A673 (cell line): ENCODE measurements at regions of chr5 and their contacts with region 1.

Region 1: DNA sequence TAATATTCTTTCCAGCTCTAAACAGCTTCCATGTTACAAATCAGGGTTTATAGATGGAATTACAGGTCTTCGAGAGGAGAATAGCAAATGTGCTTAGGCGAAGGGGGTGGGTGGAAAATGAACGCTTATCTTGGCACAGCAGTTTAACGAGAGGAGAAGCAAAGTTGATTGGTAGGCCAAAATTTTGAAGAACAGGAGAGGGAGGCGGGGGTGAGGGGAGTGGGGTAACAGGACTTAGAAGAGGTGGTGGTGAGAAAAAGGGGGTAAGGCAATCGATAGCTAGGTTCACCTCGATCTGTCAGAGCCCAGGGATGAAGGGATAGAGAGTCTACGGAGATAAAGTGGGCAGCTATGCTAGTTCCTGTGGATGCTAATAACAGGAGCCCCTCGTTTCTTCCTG is 764 bp downstream of the ANKRA2 start:
- DNase-seq: no peak
- H3K4me3 ChIP-seq: peak overlapping the region; percentile 80
- H3K27ac ChIP-seq: peak overlapping the region; percentile 88
- H3K4me1 ChIP-seq: peaks cover 10% of the 10 kb centered on the region
- H3K27me3 ChIP-seq: no peaks in the 10 kb centered on the region
- CTCF ChIP-seq: no peak

Region 2: DNA sequence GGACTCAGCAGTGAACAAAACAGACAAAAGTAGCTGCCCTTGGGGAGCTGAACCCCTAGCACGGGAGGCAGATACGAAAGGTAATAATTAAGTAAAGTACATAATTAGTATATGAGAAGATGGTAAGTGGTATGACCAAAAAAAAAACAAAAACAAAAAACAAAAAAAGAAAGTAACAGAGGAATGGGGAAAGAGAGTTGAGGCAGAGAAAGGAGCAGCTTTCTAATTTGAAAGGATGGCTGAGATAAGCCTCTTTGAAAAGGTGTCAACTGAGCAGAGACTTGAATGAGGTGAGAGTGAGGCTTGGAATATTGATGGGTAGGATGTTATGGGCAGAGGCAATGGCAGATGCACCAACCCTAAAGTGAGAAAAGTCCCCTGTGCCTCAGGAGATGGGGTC is 1775.9 kb before region 1 on chr5:
- CTCF ChIA-PET with region 1: no interaction called
- POLR2A ChIA-PET with region 1: interaction called, 10 read pairs
- intact Hi-C with region 1: no loop called
- DNase-seq: no peak
- H3K4me3 ChIP-seq: no peak overlapping the region
- H3K27ac ChIP-seq: no peak overlapping the region
- H3K4me1 ChIP-seq: no peaks in the 10 kb centered on the region
- H3K27me3 ChIP-seq: no peaks in the 10 kb centered on the region
- CTCF ChIP-seq: no peak

Region 3: GRCh38 chr5:73464016-73464745 is 100.5 kb before region 1 on chr5:
- CTCF ChIA-PET with region 1: no interaction called
- POLR2A ChIA-PET with region 1: no interaction called
- intact Hi-C with region 1: no loop called
- DNase-seq: peak; percentile 4
- H3K4me3 ChIP-seq: no peak overlapping the region
- H3K27ac ChIP-seq: no peak overlapping the region
- H3K4me1 ChIP-seq: no peaks in the 10 kb centered on the region
- H3K27me3 ChIP-seq: peaks cover 3% of the 10 kb centered on the region
- CTCF ChIP-seq: no peak

Region 4: GRCh38 chr5:73663860-73664240 is 99.2 kb after region 1 on chr5:
- CTCF ChIA-PET with region 1: no interaction called
- POLR2A ChIA-PET with region 1: no interaction called
- intact Hi-C with region 1: no loop called
- DNase-seq: no peak
- H3K4me3 ChIP-seq: no peak overlapping the region
- H3K27ac ChIP-seq: no peak overlapping the region
- H3K4me1 ChIP-seq: no peaks in the 10 kb centered on the region
- H3K27me3 ChIP-seq: no peaks in the 10 kb centered on the region
- CTCF ChIP-seq: no peak

Region 5: DNA sequence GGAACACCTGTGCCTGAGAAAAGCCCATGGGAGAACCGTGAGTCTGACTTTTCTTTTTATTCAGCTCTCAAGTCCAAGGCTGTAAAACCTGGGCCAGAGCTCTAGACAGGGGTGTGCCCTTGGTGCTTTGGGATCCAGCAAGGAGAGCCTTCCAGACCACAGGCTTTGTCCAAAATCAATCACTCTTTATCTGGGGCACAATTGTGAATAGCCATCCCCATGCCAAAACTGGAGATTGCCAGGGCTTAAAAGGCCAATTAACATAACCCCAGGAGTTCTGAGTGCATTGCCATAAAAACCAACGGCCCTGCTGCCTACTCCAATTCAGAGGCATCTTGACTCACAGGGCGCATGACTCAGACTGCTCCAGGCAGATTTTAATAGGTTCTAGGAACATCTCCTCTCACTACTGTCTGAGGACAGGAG is 453.1 kb after region 1 on chr5:
- CTCF ChIA-PET with region 1: no interaction called
- POLR2A ChIA-PET with region 1: no interaction called
- intact Hi-C with region 1: no loop called
- DNase-seq: peak; percentile 67
- H3K4me3 ChIP-seq: no peak overlapping the region
- H3K27ac ChIP-seq: no peak overlapping the region
- H3K4me1 ChIP-seq: peaks cover 4% of the 10 kb centered on the region
- H3K27me3 ChIP-seq: peaks cover 81% of the 10 kb centered on the region
- CTCF ChIP-seq: no peak